Activated naive CD8-positive, alpha-beta T cell treated with anti-CD3 and anti-CD28 coated beads, Interleukin-2, amount 10 ng/mL, durations not matched to agents 7 days and 5 days (primary cell): ENCODE measurements at regions of chr4 and their contacts with region 1.

Region 1: GRCh38 chr4:142405021-142405694 is 440.9 kb downstream of the INPP4B start:
- DNase-seq: peak; percentile 64
- ATAC-seq: peak; percentile 63
- H3K4me3 Mint-ChIP-seq: peak overlapping the region; percentile 95
- H3K27ac Mint-ChIP-seq: peak overlapping the region; percentile 97
- H3K4me1 Mint-ChIP-seq: peaks cover 52% of the 10 kb centered on the region
- H3K27me3 Mint-ChIP-seq: no peaks in the 10 kb centered on the region

Region 2: GRCh38 chr4:141099326-141099725 is 1305.8 kb before region 1 on chr4:
- POLR2A ChIA-PET with region 1: no interaction called
- DNase-seq: no peak
- ATAC-seq: no peak
- H3K4me3 Mint-ChIP-seq: no peak overlapping the region
- H3K27ac Mint-ChIP-seq: no peak overlapping the region
- H3K4me1 Mint-ChIP-seq: no peaks in the 10 kb centered on the region
- H3K27me3 Mint-ChIP-seq: no peaks in the 10 kb centered on the region

Region 3: GRCh38 chr4:142354794-142355420 is 50.3 kb before region 1 on chr4:
- POLR2A ChIA-PET with region 1: interaction called, 31 read pairs
- DNase-seq: no peak
- ATAC-seq: peak; percentile 84
- H3K4me3 Mint-ChIP-seq: peak overlapping the region; percentile 45
- H3K27ac Mint-ChIP-seq: peak overlapping the region; percentile 83
- H3K4me1 Mint-ChIP-seq: peaks cover 59% of the 10 kb centered on the region
- H3K27me3 Mint-ChIP-seq: no peaks in the 10 kb centered on the region

Region 4: DNA sequence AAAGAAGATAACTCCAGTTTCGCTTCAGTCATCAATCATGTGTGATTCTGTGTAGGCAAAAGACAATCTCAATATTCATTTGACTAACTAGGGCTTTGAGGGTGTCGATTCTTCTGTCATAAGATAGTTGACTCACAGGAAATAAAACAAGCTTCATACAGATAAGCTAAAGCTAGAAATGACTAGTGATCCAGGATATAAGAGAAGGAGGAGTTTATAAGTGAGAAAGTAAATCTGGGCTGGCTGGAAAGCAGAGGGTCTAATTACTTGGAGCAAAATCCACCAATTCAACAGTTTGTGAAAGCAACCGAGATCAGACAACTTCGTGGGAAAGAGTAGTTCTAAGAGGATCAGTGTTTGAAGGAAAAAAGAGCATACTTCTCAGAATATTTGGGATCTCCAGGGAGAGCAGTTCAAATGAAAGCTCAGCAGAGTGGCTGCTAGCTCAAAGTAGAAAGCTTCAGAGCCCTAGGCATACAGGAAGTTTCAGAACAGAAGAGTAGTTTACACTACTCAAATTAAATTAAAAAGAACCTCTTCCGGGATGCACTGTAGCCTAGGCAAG is 11.6 kb after region 1 on chr4:
- POLR2A ChIA-PET with region 1: interaction called, 49 read pairs
- DNase-seq: no peak
- ATAC-seq: peak; percentile 97
- H3K4me3 Mint-ChIP-seq: peak overlapping the region; percentile 76
- H3K27ac Mint-ChIP-seq: peak overlapping the region; percentile 94
- H3K4me1 Mint-ChIP-seq: peaks cover 25% of the 10 kb centered on the region
- H3K27me3 Mint-ChIP-seq: no peaks in the 10 kb centered on the region

Region 5: GRCh38 chr4:142434519-142435239 is 29.5 kb after region 1 on chr4:
- POLR2A ChIA-PET with region 1: no interaction called
- DNase-seq: no peak
- ATAC-seq: peak; percentile 42
- H3K4me3 Mint-ChIP-seq: no peak overlapping the region
- H3K27ac Mint-ChIP-seq: no peak overlapping the region
- H3K4me1 Mint-ChIP-seq: peaks cover 3% of the 10 kb centered on the region
- H3K27me3 Mint-ChIP-seq: no peaks in the 10 kb centered on the region

Region 6: DNA sequence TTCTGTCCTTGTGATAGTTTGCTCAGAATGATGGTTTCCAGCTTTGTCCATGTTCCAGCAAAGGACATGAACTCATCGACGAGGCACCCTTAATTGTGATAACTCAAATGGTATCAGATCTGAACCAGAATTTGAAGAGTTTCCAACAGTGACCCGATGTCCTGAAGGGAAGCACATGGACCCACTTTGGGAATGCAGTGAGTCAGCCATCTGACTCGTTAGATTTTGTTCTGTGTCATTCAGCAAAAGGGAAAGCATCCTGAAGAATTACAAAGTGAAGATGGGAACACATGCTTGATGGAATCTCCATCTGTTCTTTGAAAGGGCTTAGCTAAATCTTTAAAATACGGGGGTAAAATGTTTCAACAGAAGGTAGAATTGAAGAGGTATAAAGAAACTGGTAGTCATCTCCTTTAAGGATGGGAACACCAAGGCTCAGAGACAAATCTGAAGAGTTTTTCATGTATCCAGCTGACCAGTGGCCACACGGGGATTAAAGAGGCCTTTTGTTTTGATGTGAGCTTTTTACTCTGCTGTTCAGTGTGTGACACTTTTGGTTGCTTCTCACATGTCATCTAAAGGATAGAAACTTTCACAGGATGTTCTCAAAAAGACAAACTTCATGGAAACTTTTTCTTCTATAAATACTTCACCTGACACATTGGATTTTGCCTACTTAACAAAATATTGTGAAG is 47.1 kb after region 1 on chr4:
- POLR2A ChIA-PET with region 1: no interaction called
- DNase-seq: no peak
- ATAC-seq: no peak
- H3K4me3 Mint-ChIP-seq: no peak overlapping the region
- H3K27ac Mint-ChIP-seq: no peak overlapping the region
- H3K4me1 Mint-ChIP-seq: no peaks in the 10 kb centered on the region
- H3K27me3 Mint-ChIP-seq: no peaks in the 10 kb centered on the region

Region 7: DNA sequence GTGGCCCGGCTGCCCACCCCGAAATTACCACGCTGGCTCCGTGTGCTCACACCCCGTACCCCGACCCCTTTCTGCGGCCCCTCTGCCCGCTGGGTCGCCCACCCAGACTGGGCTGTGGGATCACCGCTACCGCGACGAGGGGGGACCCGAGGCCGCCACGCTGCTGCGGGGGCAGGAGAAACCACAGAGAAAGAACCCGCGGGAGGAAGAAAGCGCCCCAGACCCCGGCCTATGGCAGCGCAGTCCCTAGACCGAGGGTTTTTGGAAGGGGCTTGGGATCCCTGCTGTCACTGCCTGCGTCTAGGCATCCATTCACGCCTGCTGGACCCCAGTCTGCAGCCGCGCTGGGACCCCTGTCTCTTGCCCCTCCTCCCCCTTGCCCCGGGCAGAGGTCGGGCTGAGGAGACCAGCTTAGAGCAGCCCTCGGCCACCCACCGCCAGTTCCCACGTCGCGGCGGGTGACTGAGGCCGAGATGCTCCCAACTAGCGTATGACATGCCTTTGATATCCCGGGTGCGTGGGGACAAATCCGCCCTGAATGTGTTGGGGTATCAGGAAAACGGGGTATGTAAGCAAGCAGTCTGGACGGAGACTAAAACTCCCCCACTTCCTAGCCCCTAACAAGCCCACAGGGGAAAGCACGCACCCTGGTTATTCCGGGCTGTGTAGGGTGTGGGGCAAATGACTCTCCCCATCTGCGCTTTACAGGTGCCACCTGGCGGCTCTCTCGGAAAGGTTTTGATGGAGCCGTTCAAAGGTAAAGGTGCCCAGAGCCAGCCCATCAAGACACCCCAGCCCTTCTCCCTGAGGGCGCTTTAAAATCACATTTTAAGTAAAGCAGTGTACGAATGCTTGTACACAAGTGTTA is 441.8 kb after region 1 on chr4:
- POLR2A ChIA-PET with region 1: no interaction called
- DNase-seq: peak; percentile 70
- ATAC-seq: peak; percentile 74
- H3K4me3 Mint-ChIP-seq: peak overlapping the region; percentile 87
- H3K27ac Mint-ChIP-seq: no peak overlapping the region
- H3K4me1 Mint-ChIP-seq: peaks cover 9% of the 10 kb centered on the region
- H3K27me3 Mint-ChIP-seq: peaks cover 43% of the 10 kb centered on the region